Vagina (tissue), 2 donors: ENCODE measurements at regions of chr22 and their contacts with region 1.

Region 1: DNA sequence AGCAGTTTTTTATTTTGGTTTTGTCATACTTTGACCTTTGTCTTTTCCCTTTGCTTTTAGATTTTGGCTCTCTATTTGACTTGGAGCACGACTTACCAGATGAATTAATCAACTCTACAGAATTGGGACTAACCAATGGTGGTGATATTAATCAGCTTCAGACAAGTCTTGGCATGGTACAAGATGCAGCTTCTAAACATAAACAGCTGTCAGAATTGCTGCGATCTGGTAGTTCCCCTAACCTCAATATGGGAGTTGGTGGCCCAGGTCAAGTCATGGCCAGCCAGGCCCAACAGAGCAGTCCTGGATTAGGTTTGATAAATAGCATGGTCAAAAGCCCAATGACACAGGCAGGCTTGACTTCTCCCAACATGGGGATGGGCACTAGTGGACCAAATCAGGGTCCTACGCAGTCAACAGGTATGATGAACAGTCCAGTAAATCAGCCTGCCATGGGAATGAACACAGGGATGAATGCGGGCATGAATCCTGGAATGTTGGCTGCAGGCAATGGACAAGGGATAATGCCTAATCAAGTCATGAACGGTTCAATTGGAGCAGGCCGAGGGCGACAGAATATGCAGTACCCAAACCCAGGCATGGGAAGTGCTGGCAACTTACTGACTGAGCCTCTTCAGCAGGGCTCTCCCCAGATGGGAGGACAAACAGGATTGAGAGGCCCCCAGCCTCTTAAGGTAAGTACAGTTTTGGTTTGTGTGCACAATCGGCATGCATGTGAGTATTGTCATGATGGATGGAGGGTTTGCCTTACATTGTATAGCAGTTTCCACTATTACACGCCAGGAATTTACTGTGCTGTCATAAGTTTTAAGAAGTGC is 25.0 kb downstream of the EP300 start:
- DNase-seq: no peak
- H3K4me3 ChIP-seq: no peak overlapping the region
- H3K27ac ChIP-seq: no peak overlapping the region
- H3K4me1 ChIP-seq: peaks cover 39% of the 10 kb centered on the region
- H3K27me3 ChIP-seq: no peaks in the 10 kb centered on the region
- CTCF ChIP-seq: no peak
- POLR2A ChIP-seq: no peak

Region 2: DNA sequence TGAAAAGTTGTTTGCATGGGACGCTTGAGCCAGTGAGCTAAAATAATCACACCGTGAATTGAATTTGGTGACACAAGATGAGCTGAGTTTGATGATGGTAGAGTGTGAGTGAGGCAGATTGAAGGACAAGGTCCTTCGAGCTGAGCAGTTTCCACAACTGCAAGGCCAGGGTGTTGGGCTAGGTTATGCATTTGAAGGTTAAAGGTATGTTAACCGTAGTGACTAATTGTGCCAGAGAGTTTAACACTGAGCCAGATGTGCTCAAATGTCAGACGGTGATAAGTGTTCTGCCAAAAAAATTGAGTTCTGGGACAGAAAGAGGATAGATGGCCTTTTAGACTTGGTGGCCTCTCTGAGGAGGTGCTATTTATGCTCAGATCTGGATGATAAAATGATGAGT is 1033.1 kb before region 1 on chr22:
- intact Hi-C with region 1: loop called (anchors 10 kb)
- DNase-seq: no peak
- H3K4me3 ChIP-seq: no peak overlapping the region
- H3K27ac ChIP-seq: no peak overlapping the region
- H3K4me1 ChIP-seq: peaks cover 20% of the 10 kb centered on the region
- H3K27me3 ChIP-seq: no peaks in the 10 kb centered on the region
- CTCF ChIP-seq: no peak
- POLR2A ChIP-seq: no peak

Region 3: DNA sequence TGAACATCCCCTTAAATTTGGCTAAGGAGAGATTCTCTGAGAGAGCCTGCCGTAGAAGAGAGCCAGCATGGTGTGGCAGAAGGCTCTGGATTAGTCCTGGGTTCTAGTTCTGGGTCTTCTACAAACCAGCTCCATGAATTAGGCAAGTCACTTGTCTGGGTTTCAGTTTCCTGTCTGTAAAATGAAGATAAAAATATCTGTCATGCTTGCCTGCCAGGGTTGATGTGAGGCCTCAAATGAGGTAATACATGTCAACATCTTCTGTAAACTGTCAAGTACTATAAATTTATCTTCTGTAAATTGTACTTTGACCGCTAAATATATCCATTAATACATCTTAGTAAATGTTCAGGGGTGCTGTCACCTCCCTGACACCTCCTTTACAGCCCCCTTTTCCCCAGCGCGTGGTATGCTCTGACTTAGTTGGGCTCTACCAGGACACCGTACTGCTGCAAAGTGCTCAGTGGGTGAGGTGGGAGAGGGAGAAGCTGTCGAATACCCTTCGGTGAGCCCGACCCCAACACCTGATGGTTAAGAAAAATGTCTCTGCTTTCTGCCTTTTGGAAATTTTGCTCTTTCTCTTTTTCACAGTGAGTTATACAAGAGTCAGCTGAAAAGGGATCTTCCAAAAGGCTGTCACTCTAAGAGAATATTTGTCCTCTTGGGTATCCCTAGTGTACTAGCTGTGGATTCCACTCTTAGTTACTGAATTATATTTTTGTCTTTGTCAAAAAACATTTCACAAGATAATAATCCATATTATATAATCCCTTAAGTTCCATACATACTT is 151.2 kb before region 1 on chr22:
- intact Hi-C with region 1: no loop called
- DNase-seq: no peak
- H3K4me3 ChIP-seq: no peak overlapping the region
- H3K27ac ChIP-seq: no peak overlapping the region
- H3K4me1 ChIP-seq: no peaks in the 10 kb centered on the region
- H3K27me3 ChIP-seq: no peaks in the 10 kb centered on the region
- CTCF ChIP-seq: no peak
- POLR2A ChIP-seq: no peak

Region 4: GRCh38 chr22:40990430-40990829 is 126.9 kb before region 1 on chr22:
- intact Hi-C with region 1: no loop called
- DNase-seq: no peak
- H3K4me3 ChIP-seq: no peak overlapping the region
- H3K27ac ChIP-seq: no peak overlapping the region
- H3K4me1 ChIP-seq: no peaks in the 10 kb centered on the region
- H3K27me3 ChIP-seq: no peaks in the 10 kb centered on the region
- CTCF ChIP-seq: no peak
- POLR2A ChIP-seq: no peak